Activated B cell treated with CpG ODN at 0.5 μM for 24 hours (primary cell): ENCODE measurements at regions of chr2 and their contacts with region 1.

Region 1: DNA sequence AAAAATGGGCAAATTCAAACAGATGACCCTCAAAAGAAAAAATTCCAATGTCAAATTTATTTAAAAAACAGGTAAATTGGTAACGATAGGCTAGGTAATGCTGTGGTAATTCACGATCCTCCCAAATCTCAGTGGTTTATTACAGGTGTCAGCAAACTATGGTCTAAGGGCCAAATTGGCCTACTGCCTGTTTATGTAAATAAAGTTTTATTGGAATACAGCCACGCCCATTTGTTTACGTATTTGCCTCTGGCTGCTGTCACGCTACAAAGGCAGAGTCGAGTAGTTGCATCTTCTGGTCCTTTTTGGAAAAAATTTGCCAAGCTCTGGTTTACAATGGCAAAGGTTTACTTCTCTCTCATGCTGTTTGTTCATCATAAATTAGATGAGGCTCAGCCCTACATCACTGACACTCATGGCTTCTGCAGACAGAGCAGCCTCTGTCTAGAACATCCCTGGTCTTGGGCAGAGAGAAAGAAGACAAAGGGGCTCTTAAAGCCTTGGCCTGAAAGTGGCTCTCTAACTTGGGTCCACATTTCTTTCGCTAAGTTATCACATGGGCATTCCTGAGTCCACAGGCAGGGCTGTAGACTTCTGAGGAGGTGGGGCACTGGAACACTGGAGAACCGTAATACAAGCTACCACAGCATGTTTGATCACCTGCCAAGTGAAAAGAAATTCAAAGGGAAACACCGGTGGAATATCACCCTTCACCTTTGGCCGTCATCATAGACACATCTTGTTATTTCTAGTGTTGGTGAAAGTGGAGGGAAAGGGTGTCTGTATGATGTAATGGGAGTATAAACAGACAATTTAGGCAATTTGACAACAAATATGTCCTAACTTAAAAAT is 34.8 kb downstream of the SP110 start:
- DNase-seq: no peak
- ATAC-seq: no peak
- H3K4me3 Mint-ChIP-seq: no peak overlapping the region
- H3K27ac Mint-ChIP-seq: peak overlapping the region; percentile 70
- H3K4me1 Mint-ChIP-seq: peaks cover 8% of the 10 kb centered on the region
- H3K27me3 Mint-ChIP-seq: no peaks in the 10 kb centered on the region
- CTCF ChIP-seq: no peak

Region 2: GRCh38 chr2:230170532-230170931 is 14.4 kb before region 1 on chr2:
- CTCF ChIA-PET with region 1: no interaction called
- POLR2A ChIA-PET with region 1: interaction called, 12 read pairs
- intact Hi-C with region 1: no loop called
- DNase-seq: no peak
- ATAC-seq: no peak
- H3K4me3 Mint-ChIP-seq: no peak overlapping the region
- H3K27ac Mint-ChIP-seq: no peak overlapping the region
- H3K4me1 Mint-ChIP-seq: no peaks in the 10 kb centered on the region
- H3K27me3 Mint-ChIP-seq: no peaks in the 10 kb centered on the region
- CTCF ChIP-seq: no peak